Right ventricle myocardium superior (tissue), 1 donor: ENCODE measurements at regions of chr11 and their contacts with region 1.

Region 1: DNA sequence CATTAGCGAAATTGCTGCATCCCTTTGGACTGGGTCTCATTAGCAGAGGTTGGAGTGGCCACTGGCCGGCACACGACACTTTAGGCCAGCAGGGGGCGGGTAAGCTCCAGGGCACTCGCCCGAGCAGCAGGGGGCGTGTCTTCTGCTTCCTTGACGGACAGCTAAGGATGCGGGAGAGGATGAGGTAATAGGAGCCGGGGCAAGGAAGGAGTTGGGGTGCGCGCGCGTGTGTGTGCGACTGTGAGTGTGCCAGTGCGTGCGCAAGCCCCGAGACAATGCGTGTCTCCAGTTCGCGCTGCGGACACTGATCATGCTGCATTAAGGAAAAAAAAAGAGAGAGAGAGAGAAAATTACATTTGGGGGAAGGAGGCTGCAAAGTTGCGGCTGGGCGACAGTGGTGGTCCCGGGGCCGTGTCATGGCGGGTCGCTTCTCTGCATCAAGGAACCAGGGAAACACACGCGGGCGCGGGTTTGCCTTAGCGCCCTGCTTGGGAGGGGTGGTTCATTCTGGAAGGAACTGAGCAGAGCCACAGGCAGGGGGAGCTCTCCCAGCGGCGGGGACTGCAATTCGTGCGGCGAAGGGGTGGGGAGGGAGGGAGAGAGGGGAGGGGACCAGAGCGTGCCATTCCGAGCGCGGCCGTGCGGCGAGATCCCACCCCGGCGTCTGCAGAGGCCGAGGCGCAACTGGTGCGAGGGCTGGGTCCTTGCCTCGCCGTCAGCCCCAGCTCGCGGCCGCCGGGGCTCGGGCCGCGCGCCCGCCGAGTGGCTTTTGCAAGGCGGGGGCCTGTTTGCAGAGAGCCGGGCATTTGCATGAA is at the start of gene DTX4:
- DNase-seq: peak; percentile 95
- ATAC-seq: peak; percentile 97
- total RNA-seq, gene DTX4: 1.7 TPM

Region 2: GRCh38 chr11:59106363-59107336 is 65.1 kb before region 1 on chr11 and contains the start of gene FAM111B:
- intact Hi-C with region 1: no loop called
- DNase-seq: peak; percentile 86
- ATAC-seq: peak; percentile 98
- total RNA-seq, gene FAM111B: 1.0 TPM

Region 3: GRCh38 chr11:59207988-59208451 is 36.3 kb after region 1 on chr11:
- intact Hi-C with region 1: loop called (anchors 2 kb)
- DNase-seq: peak; percentile 40
- ATAC-seq: peak; percentile 72

Region 4: DNA sequence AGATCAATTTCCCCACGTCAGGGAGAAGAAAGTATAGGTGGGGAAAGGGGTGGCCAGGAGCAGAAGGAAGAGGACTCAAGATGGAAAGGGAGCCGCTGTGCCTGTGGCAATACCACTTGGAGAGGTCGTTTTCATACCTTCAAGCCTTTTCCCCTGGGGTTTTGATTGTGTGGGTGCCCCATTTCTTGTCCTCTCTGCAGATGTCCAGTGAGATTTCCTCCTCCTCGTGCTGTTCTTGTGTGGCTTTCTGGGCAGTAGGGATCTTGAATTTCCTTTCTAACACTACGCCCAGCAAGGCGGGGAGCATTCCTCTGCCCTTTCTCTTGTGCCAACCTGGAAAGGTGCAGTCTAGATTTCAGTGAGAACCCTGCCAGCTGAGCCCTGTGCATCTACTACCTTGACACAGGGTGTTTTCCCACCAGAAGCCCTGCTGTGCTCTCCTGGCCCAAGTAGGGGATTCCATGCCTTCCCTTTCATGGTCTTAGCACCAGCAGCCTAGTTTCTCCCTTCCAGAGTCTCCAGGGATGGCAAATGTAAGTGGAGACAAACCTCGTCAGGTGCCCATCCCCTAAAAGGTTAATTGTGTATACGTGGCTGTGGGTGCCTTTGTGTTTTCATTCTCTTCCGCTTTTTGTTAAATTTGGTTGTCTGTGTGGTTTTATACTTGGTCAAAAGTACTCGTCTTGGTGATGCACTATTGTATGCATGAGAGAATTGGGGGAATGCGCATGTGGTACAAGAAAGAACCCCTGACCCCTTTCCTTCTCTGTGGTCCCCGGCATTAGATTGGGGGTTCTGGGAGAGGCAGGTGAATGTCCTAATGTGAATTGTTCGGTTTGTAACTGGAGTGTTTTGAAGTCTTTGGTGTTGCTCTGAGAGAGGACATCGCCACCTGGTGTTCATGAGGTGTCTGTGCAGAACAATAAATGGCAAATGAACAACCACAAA is 112.4 kb after region 1 on chr11:
- intact Hi-C with region 1: loop called (anchors 10 kb)
- DNase-seq: no peak
- ATAC-seq: peak; percentile 77